ENCODE measurements at regions of chr16 and their contacts with region 1.

Region 1: GRCh38 chr16:68346892-68347480 is 36.2 kb downstream of the PRMT7 start:
- DNase-seq: no peak
- H3K4me3 ChIP-seq: no peak overlapping the region
- H3K27me3 ChIP-seq: no peaks in the 10 kb centered on the region
- CTCF ChIP-seq: no peak

Region 2: GRCh38 chr16:67632415-67633172 is 714.4 kb before region 1 on chr16:
- CTCF ChIA-PET with region 1: no interaction called
- POLR2A ChIA-PET with region 1: interaction called, 20 read pairs
- DNase-seq: no peak
- H3K4me3 ChIP-seq: no peak overlapping the region
- H3K27me3 ChIP-seq: no peaks in the 10 kb centered on the region
- CTCF ChIP-seq: no peak

Region 3: DNA sequence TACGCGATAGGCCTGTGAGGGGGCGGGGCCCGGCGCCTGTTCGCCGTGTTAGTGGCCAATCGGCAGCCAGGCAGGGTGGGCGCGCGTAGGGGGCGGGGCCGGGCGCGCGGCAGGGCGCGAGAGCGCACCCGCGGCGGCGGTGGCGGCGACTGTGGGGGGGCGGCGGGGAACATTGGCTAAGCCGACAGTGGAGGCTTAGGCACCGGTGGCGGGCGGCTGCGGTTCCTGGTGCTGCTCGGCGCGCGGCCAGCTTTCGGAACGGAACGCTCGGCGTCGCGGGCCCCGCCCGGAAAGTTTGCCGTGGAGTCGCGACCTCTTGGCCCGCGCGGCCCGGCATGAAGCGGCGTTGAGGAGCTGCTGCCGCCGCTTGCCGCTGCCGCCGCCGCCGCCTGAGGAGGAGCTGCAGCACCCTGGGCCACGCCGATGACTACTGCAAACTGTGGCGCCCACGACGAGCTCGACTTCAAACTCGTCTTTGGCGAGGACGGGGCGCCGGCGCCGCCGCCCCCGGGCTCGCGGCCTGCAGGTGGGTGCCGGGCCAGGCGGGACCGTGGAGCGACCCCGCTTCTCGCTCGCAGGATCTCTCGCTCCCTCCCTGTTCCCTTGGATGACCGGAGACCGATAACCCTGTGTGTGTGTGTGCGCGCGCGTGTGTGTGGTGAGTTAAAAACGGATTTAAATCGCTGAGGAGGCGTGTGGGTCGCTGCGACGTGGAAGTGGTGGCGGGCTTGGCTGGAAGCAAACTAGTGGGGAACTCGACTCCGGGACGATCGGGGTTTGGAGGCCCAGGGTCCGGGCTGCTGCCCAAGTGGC is 261.5 kb before region 1 on chr16 and contains the start of gene NFATC3:
- CTCF ChIA-PET with region 1: no interaction called
- POLR2A ChIA-PET with region 1: no interaction called
- DNase-seq: peak; percentile 61
- H3K4me3 ChIP-seq: peak within 1 kb of the TSS; percentile 81
- H3K27me3 ChIP-seq: no peaks in the 10 kb centered on the region
- CTCF ChIP-seq: no peak
- polyA plus RNA-seq, gene NFATC3: 10.5 and 14.9 TPM in 2 replicates

Region 4: GRCh38 chr16:68166264-68166663 is 180.7 kb before region 1 on chr16:
- CTCF ChIA-PET with region 1: no interaction called
- POLR2A ChIA-PET with region 1: no interaction called
- DNase-seq: no peak
- H3K4me3 ChIP-seq: no peak overlapping the region
- H3K27me3 ChIP-seq: no peaks in the 10 kb centered on the region
- CTCF ChIP-seq: no peak

Measured in BJ (cell line).